ENCODE measurements at regions of chr1 and their contacts with region 1.

Region 1: GRCh38 chr1:169367486-169368405 is at the starts of genes BLZF1 and NME7:
- DNase-seq: peak; percentile 99
- H3K4me3 Mint-ChIP-seq: peak within 1 kb of the TSS; percentile 50
- H3K27ac Mint-ChIP-seq: no peak within 1 kb of the TSS
- H3K4me1 Mint-ChIP-seq: peaks cover 30% of the 10 kb centered on the region
- H3K27me3 Mint-ChIP-seq: no peaks in the 10 kb centered on the region
- total RNA-seq, gene BLZF1: 5.6 to 6.0 TPM
- total RNA-seq, gene NME7: 7.1 to 8.5 TPM

Region 2: GRCh38 chr1:168342572-168343280 is 1025.0 kb before region 1 on chr1:
- CTCF ChIA-PET with region 1: interaction called, 3 read pairs
- intact Hi-C with region 1: loop called (anchors 5 kb)
- DNase-seq: peak; percentile 92
- H3K4me3 Mint-ChIP-seq: no peak overlapping the region
- H3K27ac Mint-ChIP-seq: no peak overlapping the region
- H3K4me1 Mint-ChIP-seq: peaks cover 19% of the 10 kb centered on the region
- H3K27me3 Mint-ChIP-seq: no peaks in the 10 kb centered on the region

Region 3: GRCh38 chr1:169138866-169139670 is 228.7 kb before region 1 on chr1:
- CTCF ChIA-PET with region 1: no interaction called
- intact Hi-C with region 1: loop called (anchors 1 kb)
- DNase-seq: no peak
- H3K4me3 Mint-ChIP-seq: no peak overlapping the region
- H3K27ac Mint-ChIP-seq: peak overlapping the region; percentile 50
- H3K4me1 Mint-ChIP-seq: peaks cover 6% of the 10 kb centered on the region
- H3K27me3 Mint-ChIP-seq: no peaks in the 10 kb centered on the region

Region 4: DNA sequence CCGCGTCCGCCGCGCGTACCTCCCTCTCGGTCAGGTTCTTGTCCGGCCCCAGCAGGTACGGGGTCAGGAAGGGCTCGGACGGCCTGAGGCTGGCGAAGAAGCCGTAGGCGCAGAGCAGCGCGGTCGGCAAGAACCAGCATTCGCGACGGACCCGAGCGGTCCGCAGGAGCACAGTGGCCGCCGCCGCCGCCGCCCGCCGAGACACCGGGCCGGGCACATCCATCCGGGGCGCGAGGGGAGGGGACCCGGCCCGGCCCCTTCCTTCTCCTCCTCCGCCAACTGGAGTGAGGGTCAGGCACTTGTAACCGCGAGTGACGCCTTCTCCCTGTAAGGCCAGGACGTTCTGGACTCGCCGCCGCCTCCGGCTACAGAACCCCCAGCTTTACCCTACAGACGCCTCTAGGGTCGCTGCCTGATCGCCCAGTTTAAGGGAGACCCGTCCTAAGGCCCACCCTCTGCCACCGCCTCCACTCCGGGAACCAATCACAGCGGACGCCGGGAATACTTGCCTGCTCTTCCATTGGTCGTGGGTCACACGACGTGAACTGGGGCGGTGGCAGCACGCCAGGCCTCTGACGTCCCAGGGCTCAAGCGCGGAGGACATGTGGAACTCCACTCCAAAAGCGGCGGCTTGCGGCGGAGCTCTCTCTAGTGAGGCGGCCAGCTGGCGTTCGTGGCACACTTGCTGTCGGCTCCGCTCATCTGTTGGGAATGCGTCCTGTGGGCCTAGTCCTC is 118.0 kb after region 1 on chr1 and contains the start of gene SLC19A2:
- CTCF ChIA-PET with region 1: no interaction called
- intact Hi-C with region 1: loop called (anchors 1 kb)
- DNase-seq: peak; percentile 96
- H3K4me3 Mint-ChIP-seq: peak within 1 kb of the TSS; percentile 89
- H3K27ac Mint-ChIP-seq: peak within 1 kb of the TSS; percentile 80
- H3K4me1 Mint-ChIP-seq: peaks cover 48% of the 10 kb centered on the region
- H3K27me3 Mint-ChIP-seq: no peaks in the 10 kb centered on the region
- total RNA-seq, gene SLC19A2: 3.2 to 3.6 TPM

Region 5: DNA sequence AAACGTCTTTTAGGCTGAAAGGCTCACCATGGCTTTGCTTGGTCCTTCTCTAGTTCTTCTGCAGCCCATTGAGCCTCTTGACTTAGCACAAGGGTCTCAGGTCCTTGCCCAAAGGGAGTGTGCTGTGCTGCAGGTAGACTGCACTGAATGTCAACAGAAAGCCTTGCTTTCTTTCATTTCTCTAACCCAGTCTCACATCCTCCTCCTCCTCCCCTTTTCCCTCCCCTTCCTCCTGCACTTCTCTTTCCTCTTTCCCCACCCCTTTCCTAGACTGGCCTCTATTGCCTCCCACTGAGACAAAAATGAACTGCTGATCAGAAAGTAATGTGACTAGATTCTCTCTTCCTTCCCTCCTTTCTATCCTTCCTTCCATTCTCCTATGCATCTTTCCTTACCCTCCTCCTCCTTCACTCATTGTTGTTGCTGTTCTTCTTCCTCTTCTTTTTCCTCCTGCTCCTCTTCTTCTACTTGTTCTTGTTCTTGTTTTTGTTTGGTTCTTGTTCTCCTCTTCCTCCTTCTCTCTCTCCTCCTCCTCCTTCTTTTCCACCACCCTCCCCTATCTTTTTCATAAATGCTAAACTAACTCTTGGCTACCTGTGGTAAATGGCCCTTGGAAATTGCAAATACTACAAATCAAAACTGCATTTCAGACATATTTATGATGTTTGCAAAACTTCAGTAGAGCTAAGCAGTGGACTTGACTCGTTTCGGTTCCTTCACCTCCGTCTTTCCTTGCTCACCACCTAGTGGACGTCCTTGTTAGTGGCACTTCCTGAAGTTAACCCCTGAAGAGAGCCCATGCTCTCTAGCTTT is 343.9 kb after region 1 on chr1 and contains the start of gene SELL:
- CTCF ChIA-PET with region 1: no interaction called
- intact Hi-C with region 1: loop called (anchors 1 kb)
- DNase-seq: peak; percentile 91
- H3K4me3 Mint-ChIP-seq: peak within 1 kb of the TSS; percentile 80
- H3K27ac Mint-ChIP-seq: peak within 1 kb of the TSS; percentile 94
- H3K4me1 Mint-ChIP-seq: peaks cover 12% of the 10 kb centered on the region
- H3K27me3 Mint-ChIP-seq: peaks cover 5% of the 10 kb centered on the region
- total RNA-seq, gene SELL: 362 to 365 TPM

Region 6: DNA sequence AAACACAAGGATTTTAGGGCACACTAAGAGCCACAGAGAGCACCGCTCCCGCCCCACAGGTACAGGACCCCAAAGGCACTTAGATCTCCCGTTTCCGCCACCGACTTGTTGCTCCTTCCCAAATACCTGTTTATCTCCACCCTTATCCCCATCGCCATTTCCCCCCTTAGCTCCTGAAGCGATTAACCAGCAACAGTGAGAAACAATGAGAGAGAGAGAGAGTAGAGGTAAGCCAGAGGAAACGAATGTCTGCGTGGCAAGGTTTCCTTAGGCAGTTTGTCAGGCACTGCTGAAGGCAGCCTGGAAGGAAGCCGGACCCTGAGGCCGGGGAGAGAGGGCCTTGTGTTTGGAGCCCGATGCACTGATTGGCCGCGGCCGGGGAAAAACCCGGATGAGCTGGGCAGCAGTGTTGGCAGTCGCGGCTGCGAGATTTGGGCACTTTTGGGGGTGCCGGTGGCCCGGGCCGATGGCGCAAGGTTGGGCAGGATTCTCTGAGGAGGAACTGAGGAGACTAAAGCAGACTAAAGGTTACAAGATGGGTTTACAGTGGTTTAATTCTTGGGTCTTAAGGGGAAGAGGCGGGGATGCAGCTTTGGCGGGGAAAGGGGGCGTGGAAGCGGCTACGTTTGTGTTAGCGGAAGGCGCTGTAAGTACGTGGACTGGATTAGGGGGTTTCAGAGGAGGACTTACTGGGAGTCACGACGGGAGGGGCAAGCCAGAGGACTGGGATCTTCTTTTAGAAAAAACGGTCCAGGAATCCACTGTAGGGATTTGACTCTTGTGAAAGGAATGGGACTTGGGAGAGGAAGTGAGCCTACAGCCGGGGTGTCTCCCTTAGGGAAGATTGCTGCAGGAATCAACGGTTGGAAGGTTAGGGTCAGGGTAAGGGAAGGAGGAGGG is 1164.3 kb after region 1 on chr1 and contains the start of gene GORAB:
- CTCF ChIA-PET with region 1: no interaction called
- intact Hi-C with region 1: loop called (anchors 5 kb)
- DNase-seq: peak; percentile 93
- H3K4me3 Mint-ChIP-seq: no peak within 1 kb of the TSS
- H3K27ac Mint-ChIP-seq: no peak within 1 kb of the TSS
- H3K4me1 Mint-ChIP-seq: peaks cover 13% of the 10 kb centered on the region
- H3K27me3 Mint-ChIP-seq: no peaks in the 10 kb centered on the region
- total RNA-seq, gene GORAB: 9.5 TPM